Calu3 (cell line): ENCODE measurements at regions of chr14 and their contacts with region 1.

Region 1: DNA sequence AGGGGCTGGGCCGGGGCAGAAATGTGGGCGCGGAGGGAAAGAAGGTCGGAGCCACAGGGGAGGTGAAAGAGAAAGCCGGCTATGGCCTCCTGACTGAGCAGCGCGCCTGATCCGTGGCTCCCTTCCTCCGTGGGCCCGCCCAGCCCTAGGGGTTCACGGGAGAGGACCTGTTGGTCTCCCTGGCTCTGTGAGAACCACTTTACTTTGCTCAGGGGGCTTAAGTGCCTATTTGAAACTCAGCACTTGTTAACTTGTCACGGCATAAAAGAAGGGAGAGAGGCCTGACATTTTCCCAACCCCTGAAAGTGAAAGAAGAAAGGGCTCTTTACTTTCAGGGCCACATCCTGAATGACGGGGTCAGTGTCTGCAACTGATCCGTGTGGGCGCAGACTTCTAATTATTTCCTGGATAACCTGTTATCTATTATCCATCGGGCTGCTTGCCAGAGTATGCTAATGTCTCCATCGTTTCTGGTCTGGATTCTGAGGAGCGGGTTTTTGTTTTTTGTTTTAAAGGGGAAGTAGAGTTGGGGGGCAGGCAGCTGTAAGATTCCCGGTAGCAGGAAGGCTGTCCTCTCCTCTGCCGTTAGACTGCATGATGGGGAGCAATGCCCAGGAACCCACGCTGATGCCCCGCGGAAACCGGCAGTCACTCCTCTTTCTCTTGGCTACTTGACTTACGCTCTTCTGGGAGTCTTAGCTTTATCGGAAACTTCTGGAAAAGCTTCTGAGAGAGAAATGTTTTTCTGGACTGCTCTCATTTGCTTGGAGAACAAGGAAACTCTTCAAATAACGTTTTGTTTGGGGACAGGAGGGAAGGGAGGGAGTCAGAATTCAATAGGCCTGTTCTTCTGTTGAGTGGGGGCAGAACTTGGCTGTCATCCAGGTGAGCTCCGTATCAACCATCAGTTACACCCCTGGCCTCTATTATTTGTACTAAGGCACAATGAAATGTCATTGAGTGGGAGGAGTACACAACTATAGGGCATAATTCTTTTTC is 127.7 kb upstream of the MAX start:
- DNase-seq: peak; percentile 76
- H3K4me3 Mint-ChIP-seq: peak overlapping the region; percentile 66
- H3K27ac Mint-ChIP-seq: peak overlapping the region; percentile 97
- H3K4me1 Mint-ChIP-seq: peaks cover 75% of the 10 kb centered on the region
- H3K27me3 Mint-ChIP-seq: no peaks in the 10 kb centered on the region
- CTCF ChIP-seq: no peak

Region 2: GRCh38 chr14:64828071-64828470 is 402.0 kb before region 1 on chr14:
- CTCF ChIA-PET with region 1: no interaction called
- intact Hi-C with region 1: no loop called
- DNase-seq: no peak
- H3K4me3 Mint-ChIP-seq: no peak overlapping the region
- H3K27ac Mint-ChIP-seq: no peak overlapping the region
- H3K4me1 Mint-ChIP-seq: peaks cover 6% of the 10 kb centered on the region
- H3K27me3 Mint-ChIP-seq: peaks cover 49% of the 10 kb centered on the region
- CTCF ChIP-seq: no peak

Region 3: GRCh38 chr14:65179918-65180724 is 49.9 kb before region 1 on chr14:
- CTCF ChIA-PET with region 1: no interaction called
- intact Hi-C with region 1: loop called (anchors 5 kb)
- DNase-seq: peak; percentile 73
- H3K4me3 Mint-ChIP-seq: peak overlapping the region; percentile 2
- H3K27ac Mint-ChIP-seq: peak overlapping the region; percentile 88
- H3K4me1 Mint-ChIP-seq: peaks cover 32% of the 10 kb centered on the region
- H3K27me3 Mint-ChIP-seq: no peaks in the 10 kb centered on the region
- CTCF ChIP-seq: no peak

Region 4: GRCh38 chr14:65290830-65291229 is 60.8 kb after region 1 on chr14:
- CTCF ChIA-PET with region 1: no interaction called
- intact Hi-C with region 1: loop called (anchors 2 kb)
- DNase-seq: peak; percentile 85
- H3K4me3 Mint-ChIP-seq: peak overlapping the region; percentile 5
- H3K27ac Mint-ChIP-seq: peak overlapping the region; percentile 86
- H3K4me1 Mint-ChIP-seq: peaks cover 37% of the 10 kb centered on the region
- H3K27me3 Mint-ChIP-seq: no peaks in the 10 kb centered on the region
- CTCF ChIP-seq: no peak

Region 5: GRCh38 chr14:65356327-65356852 is 126.3 kb after region 1 on chr14:
- CTCF ChIA-PET with region 1: no interaction called
- intact Hi-C with region 1: loop called (anchors 2 kb)
- DNase-seq: peak; percentile 82
- H3K4me3 Mint-ChIP-seq: no peak overlapping the region
- H3K27ac Mint-ChIP-seq: peak overlapping the region; percentile 83
- H3K4me1 Mint-ChIP-seq: peaks cover 28% of the 10 kb centered on the region
- H3K27me3 Mint-ChIP-seq: no peaks in the 10 kb centered on the region
- CTCF ChIP-seq: no peak